AG04450 (cell line): ENCODE measurements at regions of chr3 and their contacts with region 1.

Region 1: GRCh38 chr3:127697551-127698240 is 24.9 kb downstream of the ABTB1 start:
- DNase-seq: peak; percentile 72
- H3K4me3 ChIP-seq: peak overlapping the region; percentile 7; the same call in 1 of the 2 replicates
- H3K27ac ChIP-seq: peak overlapping the region; percentile 96
- H3K27me3 ChIP-seq: no peaks in the 10 kb centered on the region
- CTCF ChIP-seq: no peak

Region 2: DNA sequence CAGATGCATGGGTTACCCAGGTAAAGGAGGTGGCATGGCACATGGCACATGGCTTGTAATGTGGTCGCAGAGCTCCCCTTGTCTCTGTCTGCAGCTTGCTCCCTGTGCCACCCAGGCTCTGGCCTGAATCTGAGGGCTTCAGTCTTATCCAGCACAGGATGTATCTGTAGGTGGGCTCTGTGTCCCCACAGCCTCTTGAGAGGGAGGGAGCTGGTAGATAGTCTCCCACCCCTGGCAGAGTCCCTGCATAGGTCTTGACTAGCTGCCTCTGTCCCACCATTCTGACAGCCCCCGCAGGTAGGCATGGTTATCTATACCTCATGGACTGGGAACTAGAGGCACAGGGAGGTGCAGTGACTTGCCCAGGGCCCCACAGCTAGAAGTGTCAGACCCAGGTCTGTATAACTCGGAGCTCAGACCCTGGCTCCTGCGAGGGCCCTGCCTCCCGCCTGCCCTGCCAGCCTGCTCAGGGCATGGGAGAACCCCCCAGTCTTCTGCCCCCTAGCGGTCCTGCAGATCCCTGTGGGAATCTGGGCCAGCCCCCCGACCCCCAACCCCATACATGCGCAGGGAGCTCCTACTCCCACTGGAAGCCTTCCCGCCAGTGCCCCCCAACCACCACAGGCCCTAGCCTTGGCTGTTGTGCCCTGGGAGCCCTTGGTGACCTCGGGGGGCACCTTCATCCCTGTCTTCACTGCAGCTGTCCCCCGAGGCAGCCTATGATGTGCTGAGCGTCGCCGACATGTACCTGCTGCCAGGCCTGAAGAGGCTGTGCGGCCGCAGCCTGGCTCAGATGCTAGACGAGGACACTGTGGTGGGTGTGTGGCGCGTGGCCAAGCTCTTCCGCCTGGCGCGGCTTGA is 18.2 kb before region 1 on chr3:
- CTCF ChIA-PET with region 1: interaction called, 15 read pairs
- POLR2A ChIA-PET with region 1: no interaction called
- DNase-seq: no peak
- H3K4me3 ChIP-seq: no peak overlapping the region
- H3K27ac ChIP-seq: no peak overlapping the region
- H3K27me3 ChIP-seq: no peaks in the 10 kb centered on the region
- CTCF ChIP-seq: peak; percentile 11; the same call in 1 of the 2 replicates

Region 3: DNA sequence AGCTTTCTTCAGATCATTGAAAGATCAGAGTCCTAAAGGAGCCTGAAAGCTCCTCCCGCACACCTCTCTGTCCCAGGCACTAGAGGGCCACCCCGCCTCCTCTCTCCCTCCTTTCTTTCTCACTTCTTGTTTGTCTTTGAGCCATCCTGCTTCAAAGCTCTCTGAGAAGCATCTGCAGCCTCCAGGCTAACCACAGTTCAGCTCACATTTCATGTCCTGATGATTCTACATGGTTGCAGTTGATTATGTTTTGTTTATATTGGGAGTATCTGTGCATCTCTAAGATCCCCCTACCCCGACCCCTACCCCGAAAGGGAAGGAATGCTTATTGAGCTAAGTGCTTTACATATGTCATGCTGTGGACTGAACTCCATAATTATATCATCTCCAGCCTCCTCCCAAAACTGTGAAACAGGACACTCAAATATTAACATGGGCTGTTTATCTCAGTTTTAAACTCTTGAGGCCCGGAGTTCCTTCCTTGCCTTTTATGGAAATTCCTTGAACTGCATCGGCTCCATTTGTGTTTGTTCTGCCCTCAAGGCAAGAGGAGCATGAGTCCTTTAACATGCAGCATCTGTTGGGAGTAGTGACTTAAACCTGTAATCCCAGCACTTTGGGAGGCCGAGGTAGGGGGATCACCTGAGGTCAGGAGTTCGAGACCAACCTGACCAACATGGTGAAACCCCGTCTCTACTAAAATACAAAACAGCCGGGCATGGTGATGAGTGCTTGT is 93.7 kb after region 1 on chr3:
- CTCF ChIA-PET with region 1: interaction called, 16 read pairs
- POLR2A ChIA-PET with region 1: interaction called, 6 read pairs
- DNase-seq: peak; percentile 76
- H3K4me3 ChIP-seq: no peak overlapping the region
- H3K27ac ChIP-seq: peak overlapping the region; percentile 94
- H3K27me3 ChIP-seq: no peaks in the 10 kb centered on the region
- CTCF ChIP-seq: peak; percentile 34

Region 4: GRCh38 chr3:127831723-127832172 is 134.1 kb after region 1 on chr3:
- CTCF ChIA-PET with region 1: interaction called, 20 read pairs
- POLR2A ChIA-PET with region 1: no interaction called
- DNase-seq: no peak
- H3K4me3 ChIP-seq: no peak overlapping the region
- H3K27ac ChIP-seq: no peak overlapping the region
- H3K27me3 ChIP-seq: no peaks in the 10 kb centered on the region
- CTCF ChIP-seq: peak; percentile 69